Endothelial cell of umbilical vein (primary cell): ENCODE measurements at regions of chr1 and their contacts with region 1.

Region 1: DNA sequence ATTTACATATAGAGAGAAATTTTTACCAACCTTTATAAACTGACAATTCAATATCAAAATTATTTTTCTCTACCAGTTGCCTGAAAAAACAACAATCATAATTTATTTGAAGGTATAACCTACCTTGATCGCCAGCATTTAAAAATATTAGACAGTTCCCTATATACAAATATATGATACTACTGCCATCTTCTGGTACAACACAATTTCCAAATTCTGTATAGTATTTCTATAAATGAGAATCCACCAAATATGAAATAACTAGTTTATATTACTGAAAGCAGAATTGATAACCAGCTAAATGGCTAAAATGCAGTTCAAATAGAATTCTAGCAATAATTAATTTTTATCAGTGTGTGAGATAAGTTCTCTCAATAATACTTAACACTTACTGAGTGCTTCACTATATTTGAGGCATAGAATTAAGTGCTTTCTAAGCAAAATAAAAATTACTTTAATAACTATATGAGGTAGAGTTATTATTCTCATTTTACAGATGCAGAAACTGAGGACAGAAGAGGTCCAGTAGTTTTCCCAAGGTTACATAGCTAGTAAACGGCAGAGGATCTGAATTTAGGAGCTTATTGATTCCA is 75.6 kb downstream of the PIGK start:
- DNase-seq: peak; percentile 16
- H3K4me3 ChIP-seq: no peak overlapping the region
- H3K27ac ChIP-seq: no peak overlapping the region
- H3K4me1 ChIP-seq: no peaks in the 10 kb centered on the region
- H3K27me3 ChIP-seq: no peaks in the 10 kb centered on the region
- CTCF ChIP-seq: no peak
- POLR2A ChIP-seq: no peak

Region 2: GRCh38 chr1:75991497-75992114 is 1152.0 kb before region 1 on chr1:
- CTCF ChIA-PET with region 1: interaction called, 9 read pairs
- POLR2A ChIA-PET with region 1: no interaction called
- dilution Hi-C with region 1: no loop called
- intact Hi-C with region 1: loop called (anchors 1 kb)
- DNase-seq: peak; percentile 81
- H3K4me3 ChIP-seq: no peak overlapping the region
- H3K27ac ChIP-seq: no peak overlapping the region
- H3K4me1 ChIP-seq: no peaks in the 10 kb centered on the region
- H3K27me3 ChIP-seq: peaks cover 2 to 3% of the 10 kb centered on the region in 2 experiments
- CTCF ChIP-seq: peak; percentile 71 to 78
- POLR2A ChIP-seq: no peak

Region 3: DNA sequence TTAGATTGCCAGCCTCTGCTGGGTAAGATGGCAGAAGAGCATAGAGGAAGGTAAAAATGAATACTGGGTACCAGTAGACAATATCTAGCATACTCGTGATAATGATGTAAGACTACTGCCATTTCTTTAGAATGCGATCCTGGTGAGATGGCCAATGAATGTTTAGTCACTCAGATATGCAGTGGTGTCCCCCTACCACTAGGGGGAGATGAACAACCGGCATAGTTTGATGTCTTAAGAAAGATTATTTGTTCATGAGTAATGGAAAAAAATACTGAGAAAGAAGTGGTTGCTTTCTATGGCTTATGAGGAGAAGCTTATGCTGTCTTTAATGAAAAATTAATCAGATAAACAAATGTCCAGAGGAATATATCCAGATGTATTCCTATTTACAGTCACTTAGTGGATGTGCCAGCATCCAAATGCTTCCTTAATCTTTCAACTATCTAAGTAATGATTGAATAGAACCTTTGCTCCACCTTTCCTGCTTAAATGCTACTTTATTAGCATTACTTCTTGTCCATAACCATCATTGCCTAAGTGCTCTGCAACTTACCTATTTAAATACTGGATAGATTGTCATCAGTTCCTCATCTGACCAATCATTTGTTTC is 812.5 kb before region 1 on chr1:
- CTCF ChIA-PET with region 1: no interaction called
- POLR2A ChIA-PET with region 1: no interaction called
- dilution Hi-C with region 1: no loop called
- intact Hi-C with region 1: loop called (anchors 2 kb)
- DNase-seq: peak; percentile 76
- H3K4me3 ChIP-seq: no peak overlapping the region
- H3K27ac ChIP-seq: no peak overlapping the region
- H3K4me1 ChIP-seq: no peaks in the 10 kb centered on the region
- H3K27me3 ChIP-seq: no peaks in the 10 kb centered on the region
- CTCF ChIP-seq: peak; percentile 81 to 91
- POLR2A ChIP-seq: no peak

Region 4: DNA sequence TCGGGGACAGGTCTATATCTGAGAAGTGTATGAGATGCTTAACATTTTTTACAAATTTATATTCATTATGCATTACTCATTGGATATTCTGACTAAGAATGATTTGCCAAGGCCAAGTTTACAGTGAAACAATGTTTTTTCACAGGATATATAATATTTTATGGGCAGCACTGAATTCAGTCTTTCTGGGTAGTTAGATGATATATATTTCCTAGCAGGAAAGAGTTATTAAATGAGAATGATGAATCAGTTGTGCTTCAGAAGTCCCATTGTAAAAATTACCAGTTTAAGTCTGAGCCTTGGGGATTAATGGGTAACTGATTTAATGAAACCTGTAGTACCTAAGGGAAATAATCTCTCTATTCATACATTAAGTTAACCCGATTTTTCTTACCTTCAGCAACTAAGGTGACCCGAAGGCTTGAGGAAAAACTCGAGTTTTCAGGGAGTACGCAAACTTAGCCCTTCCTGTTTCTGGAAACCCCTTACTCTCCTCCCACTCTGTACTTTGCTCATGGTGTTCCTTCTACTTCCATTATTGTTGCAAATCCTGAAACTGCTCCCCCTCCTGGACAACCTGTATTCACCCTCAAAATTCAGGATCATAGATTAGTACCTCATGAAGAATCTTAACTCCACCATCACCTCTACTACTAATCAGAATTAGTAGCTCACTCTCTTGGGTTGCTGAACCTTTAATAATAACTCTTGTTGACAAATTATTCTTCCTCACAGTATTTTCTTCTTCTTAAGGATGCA is 273.2 kb after region 1 on chr1:
- CTCF ChIA-PET with region 1: no interaction called
- POLR2A ChIA-PET with region 1: no interaction called
- dilution Hi-C with region 1: no loop called
- intact Hi-C with region 1: loop called (anchors 2 kb)
- DNase-seq: peak; percentile 32
- H3K4me3 ChIP-seq: no peak overlapping the region
- H3K27ac ChIP-seq: no peak overlapping the region
- H3K4me1 ChIP-seq: peaks cover 14% of the 10 kb centered on the region
- H3K27me3 ChIP-seq: no peaks in the 10 kb centered on the region
- CTCF ChIP-seq: peak; percentile 27 to 28
- POLR2A ChIP-seq: no peak

Region 5: DNA sequence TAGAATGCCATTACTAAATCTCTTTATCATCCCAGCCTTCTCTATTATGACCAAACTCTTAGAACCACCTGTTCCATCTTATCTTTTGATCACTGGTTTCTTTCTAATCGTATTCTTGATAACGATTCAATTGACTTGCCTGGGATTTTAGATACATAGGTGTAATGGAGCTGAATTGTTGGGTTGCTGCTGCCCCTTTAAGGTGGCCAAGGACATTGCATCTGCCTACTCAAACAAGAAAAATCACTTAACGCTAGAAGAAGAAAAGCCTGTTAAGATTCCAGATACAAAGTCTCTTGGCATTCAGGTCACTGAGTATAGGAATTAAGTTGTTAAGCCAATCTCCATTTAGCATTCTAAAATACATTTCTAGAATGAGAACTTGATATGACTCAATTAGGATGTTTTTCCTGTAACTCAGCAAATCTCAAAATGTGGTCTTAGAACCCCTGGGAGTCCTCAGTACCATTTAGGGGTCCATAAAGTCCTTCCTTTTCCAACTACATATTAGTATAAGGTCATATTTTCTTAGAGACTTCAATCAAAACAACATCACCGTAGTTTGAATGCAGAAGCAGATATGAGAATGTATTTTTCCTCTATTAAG is 757.2 kb after region 1 on chr1:
- CTCF ChIA-PET with region 1: no interaction called
- POLR2A ChIA-PET with region 1: no interaction called
- dilution Hi-C with region 1: no loop called
- intact Hi-C with region 1: loop called (anchors 1 kb)
- DNase-seq: peak; percentile 83
- H3K4me3 ChIP-seq: no peak overlapping the region
- H3K27ac ChIP-seq: no peak overlapping the region
- H3K4me1 ChIP-seq: peaks cover 4% of the 10 kb centered on the region
- H3K27me3 ChIP-seq: no peaks in the 10 kb centered on the region
- CTCF ChIP-seq: peak; percentile 56 to 63
- POLR2A ChIP-seq: no peak